CD4-positive, alpha-beta memory T cell (primary cell): ENCODE measurements at regions of chr1 and their contacts with region 1.

Region 1: DNA sequence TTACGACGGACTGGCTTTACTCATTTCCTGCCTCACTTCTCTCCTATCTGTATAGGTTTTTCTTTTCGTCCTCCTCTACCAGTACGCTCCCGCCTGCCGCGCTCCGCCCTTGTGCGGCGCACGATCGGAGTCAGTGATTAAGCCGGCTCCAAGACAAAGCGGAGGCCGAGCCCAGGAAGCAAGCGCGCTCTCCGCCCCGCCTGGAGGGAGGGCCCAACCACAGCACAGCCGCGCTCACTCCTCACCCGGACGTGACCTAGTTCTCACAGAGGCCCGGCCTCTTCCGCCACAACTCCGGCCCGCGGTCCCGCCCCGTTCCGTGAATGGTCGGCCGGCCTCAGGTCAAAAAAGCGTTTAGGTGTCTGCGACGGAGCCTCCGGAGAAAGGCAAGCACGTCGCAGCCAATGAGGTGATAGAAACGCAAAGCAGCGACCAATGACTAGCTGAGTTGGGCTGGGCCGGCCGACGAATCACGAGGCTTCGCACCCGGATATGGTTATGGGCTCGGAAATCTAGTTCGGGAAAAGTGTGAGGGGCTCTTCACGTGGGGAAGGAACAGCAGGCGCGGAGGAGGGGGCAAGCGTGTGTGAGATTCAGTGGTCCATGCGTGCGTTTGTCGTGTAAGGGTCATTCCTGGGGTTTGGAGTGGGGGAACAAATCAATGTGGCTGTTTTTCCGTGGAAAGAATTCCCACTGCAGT is at the start of gene METTL13:
- DNase-seq: peak; percentile 98 to 100 (median 99)
- H3K4me3 ChIP-seq: peak within 1 kb of the TSS; percentile 92 to 99
- H3K4me3 Mint-ChIP-seq: peak within 1 kb of the TSS; percentile 94 to 100 (median 96)
- H3K27ac ChIP-seq: peak within 1 kb of the TSS; percentile 71
- H3K27ac Mint-ChIP-seq: peak within 1 kb of the TSS; percentile 86 to 99 (median 98)
- H3K4me1 ChIP-seq: peaks cover 53% of the 10 kb centered on the region
- H3K4me1 Mint-ChIP-seq: peaks cover 37 to 67% (median 48%) of the 10 kb centered on the region in 4 donors
- H3K27me3 ChIP-seq: no peaks in the 10 kb centered on the region
- H3K27me3 Mint-ChIP-seq: no peaks in the 10 kb centered on the region
- total RNA-seq, gene METTL13: 33.3 to 36.7 TPM

Region 2: DNA sequence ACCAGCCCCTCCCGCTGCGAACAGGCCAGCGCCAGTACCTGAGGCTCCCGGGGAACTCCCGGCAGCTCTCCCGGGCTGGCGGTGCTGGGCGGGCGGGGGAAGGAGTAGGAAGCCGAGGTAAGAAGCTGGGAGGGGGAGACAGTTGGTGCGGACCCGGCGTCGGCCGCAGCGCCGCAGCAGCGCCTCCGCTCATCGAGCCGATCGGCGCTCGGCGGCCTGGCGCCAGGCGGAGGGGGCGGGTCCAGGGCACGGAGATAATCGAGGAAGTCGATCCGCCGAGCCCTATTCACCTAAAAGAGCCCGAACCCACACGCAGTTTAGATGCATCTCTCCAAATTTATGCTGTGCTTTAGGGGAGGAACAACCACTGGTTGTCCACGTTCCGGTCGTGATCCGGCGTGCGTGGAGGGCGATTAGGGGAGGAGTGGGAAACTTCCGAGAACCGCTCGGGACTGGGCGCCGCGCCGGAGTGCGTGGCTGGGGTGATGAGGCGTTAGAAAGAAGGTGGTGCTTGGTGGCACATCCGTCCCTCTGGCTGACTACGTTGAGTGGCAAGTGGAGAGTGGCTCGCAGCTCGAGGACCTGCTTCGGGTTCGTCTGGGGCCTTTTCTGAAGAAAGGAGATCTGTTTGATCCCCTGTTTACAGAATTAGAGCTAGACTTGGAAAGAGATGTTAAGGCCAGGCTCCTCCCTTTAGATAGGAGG is 39.3 kb before region 1 on chr1 and contains the start of gene VAMP4:
- CTCF ChIA-PET with region 1: interaction called, 31 read pairs
- POLR2A ChIA-PET with region 1: interaction called, 173 read pairs
- intact Hi-C with region 1: loop called (anchors 1 kb)
- DNase-seq: peak; percentile 85 to 90 (median 89)
- H3K4me3 ChIP-seq: peak within 1 kb of the TSS; percentile 84 to 92
- H3K4me3 Mint-ChIP-seq: peak within 1 kb of the TSS; percentile 97 to 100 (median 100)
- H3K27ac ChIP-seq: peak within 1 kb of the TSS; percentile 96
- H3K27ac Mint-ChIP-seq: peak within 1 kb of the TSS; percentile 98 to 100 (median 99)
- H3K4me1 ChIP-seq: peaks cover 44% of the 10 kb centered on the region
- H3K4me1 Mint-ChIP-seq: peaks cover 31 to 62% (median 48%) of the 10 kb centered on the region in 4 donors
- H3K27me3 ChIP-seq: no peaks in the 10 kb centered on the region
- H3K27me3 Mint-ChIP-seq: no peaks in the 10 kb centered on the region
- total RNA-seq, gene VAMP4: 29.4 to 32.0 TPM

Region 3: DNA sequence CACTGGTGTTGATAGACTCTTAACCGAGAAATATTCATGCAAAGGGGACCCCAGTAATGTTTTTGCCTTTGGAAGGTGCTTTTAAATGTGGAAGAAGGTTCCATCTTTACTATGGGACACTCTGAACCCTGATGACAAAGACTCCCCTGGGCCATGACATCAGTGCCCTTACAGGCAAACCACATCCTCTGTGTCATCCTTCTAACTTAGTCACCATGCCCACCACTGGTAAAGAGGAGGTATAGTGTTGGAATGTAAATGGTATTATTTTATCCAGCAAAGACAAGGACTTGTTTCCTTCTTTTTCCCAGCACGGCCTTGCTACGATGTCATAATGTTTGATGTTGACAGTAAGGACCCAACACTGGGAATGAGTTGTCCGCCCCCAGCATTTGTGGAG is 12.8 kb after region 1 on chr1:
- CTCF ChIA-PET with region 1: no interaction called
- POLR2A ChIA-PET with region 1: no interaction called
- intact Hi-C with region 1: loop called (anchors 1 kb)
- DNase-seq: peak in 2 of 5 donors; percentile 14 to 51
- H3K4me3 ChIP-seq: no peak overlapping the region
- H3K4me3 Mint-ChIP-seq: no peak overlapping the region
- H3K27ac ChIP-seq: no peak overlapping the region
- H3K27ac Mint-ChIP-seq: peak overlapping the region in 6 of 7 donors; percentile 10 to 87 (median 39)
- H3K4me1 ChIP-seq: no peaks in the 10 kb centered on the region
- H3K4me1 Mint-ChIP-seq: peaks cover 3 to 16% (median 14%) of the 10 kb centered on the region in 4 donors
- H3K27me3 ChIP-seq: no peaks in the 10 kb centered on the region
- H3K27me3 Mint-ChIP-seq: no peaks in the 10 kb centered on the region

Region 4: DNA sequence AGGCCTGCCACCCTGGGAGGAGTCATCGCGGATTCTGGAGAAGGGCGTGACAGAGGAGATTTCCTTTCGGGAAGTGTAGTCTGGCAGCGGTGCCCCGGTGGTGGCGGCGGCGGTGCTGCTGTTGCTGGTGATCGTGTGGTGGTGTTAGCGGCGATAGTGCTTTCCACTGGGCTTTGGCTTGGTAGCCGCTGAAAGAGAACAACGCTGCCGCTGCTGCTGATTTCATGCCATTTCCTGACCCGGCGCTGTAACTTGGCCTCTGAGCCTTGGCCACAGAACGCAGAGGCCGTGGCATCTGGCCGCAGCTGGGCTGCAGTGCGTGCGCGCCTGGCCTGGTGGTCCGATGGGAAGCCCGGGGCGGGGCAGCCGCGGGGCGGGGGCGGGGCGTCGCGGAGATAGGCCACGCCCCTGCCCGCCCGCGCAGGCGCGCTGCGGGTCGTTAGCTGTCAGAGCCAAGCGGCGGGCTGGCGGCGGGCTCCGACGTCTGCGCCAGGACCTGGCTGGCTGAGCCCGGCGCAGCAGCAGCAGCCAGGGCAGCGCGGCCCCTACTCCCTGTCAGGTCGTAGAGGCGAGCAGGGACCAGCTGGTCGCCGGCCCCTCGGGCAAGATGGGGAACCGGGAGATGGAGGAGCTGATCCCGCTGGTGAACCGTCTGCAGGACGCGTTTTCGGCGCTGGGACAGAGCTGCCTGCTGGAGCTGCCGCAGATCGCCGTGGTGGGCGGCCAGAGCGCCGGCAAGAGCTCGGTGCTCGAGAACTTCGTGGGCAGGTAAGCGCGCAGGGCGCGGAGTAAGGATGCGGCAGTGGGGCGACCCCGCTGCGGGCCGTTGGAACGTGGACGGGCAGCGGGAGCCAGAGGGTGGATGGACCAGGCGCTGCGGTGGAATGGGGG is 60.0 kb after region 1 on chr1 and contains the start of gene DNM3:
- CTCF ChIA-PET with region 1: no interaction called
- POLR2A ChIA-PET with region 1: interaction called, 16 read pairs
- intact Hi-C with region 1: loop called (anchors 1 kb)
- DNase-seq: peak; percentile 70 to 89 (median 85)
- H3K4me3 ChIP-seq: peak within 1 kb of the TSS; percentile 43 to 66
- H3K4me3 Mint-ChIP-seq: peak within 1 kb of the TSS; percentile 88 to 93 (median 89)
- H3K27ac ChIP-seq: peak within 1 kb of the TSS; percentile 41
- H3K27ac Mint-ChIP-seq: peak within 1 kb of the TSS; percentile 62 to 94 (median 81)
- H3K4me1 ChIP-seq: peaks cover 16% of the 10 kb centered on the region
- H3K4me1 Mint-ChIP-seq: peaks cover 12 to 20% (median 15%) of the 10 kb centered on the region in 4 donors
- H3K27me3 ChIP-seq: peaks cover 13% of the 10 kb centered on the region
- H3K27me3 Mint-ChIP-seq: peaks cover 7 to 10% of the 10 kb centered on the region in 2 donors
- total RNA-seq, gene DNM3: 2.0 to 2.7 TPM

Region 5: GRCh38 chr1:171929121-171929520 is 147.8 kb after region 1 on chr1:
- CTCF ChIA-PET with region 1: no interaction called
- POLR2A ChIA-PET with region 1: no interaction called
- intact Hi-C with region 1: no loop called
- DNase-seq: no peak
- H3K4me3 ChIP-seq: no peak overlapping the region
- H3K4me3 Mint-ChIP-seq: peak overlapping the region in 1 of 8 donors; percentile 21
- H3K27ac ChIP-seq: no peak overlapping the region
- H3K27ac Mint-ChIP-seq: no peak overlapping the region
- H3K4me1 ChIP-seq: no peaks in the 10 kb centered on the region
- H3K4me1 Mint-ChIP-seq: no peaks in the 10 kb centered on the region
- H3K27me3 ChIP-seq: no peaks in the 10 kb centered on the region
- H3K27me3 Mint-ChIP-seq: peaks cover 2 to 4% of the 10 kb centered on the region in 2 donors